ENCODE measurements at regions of chr6 and their contacts with region 1.

Region 1: GRCh38 chr6:108250240-108250866 is 10.5 kb downstream of the SNX3 start:
- DNase-seq: peak; percentile 38 to 61 (median 41)
- ATAC-seq: peak; percentile 90
- H3K4me3 ChIP-seq: no peak overlapping the region
- H3K27ac ChIP-seq: no peak overlapping the region
- H3K4me1 ChIP-seq: peaks cover 3 to 6% of the 10 kb centered on the region in 2 experiments; a peak in 2 of 5 replicates
- H3K27me3 ChIP-seq: no peaks in the 10 kb centered on the region
- CTCF ChIP-seq: peak; percentile 51 to 67 (median 54)
- EP300 ChIP-seq: no peak
- POLR2A ChIP-seq: no peak
- RAD21 ChIP-seq: peak; percentile 24 to 71; a peak in 3 of 4 replicates

Region 2: GRCh38 chr6:108113557-108114519 is 136.5 kb before region 1 on chr6:
- CTCF ChIA-PET with region 1: no interaction called
- POLR2A ChIA-PET with region 1: no interaction called
- in situ Hi-C with region 1: no loop called
- intact Hi-C with region 1: loop called (anchors 10 kb)
- DNase-seq: peak; percentile 60 to 67 (median 62)
- ATAC-seq: peak; percentile 81
- H3K4me3 ChIP-seq: no peak overlapping the region
- H3K27ac ChIP-seq: no peak overlapping the region
- H3K4me1 ChIP-seq: peaks cover 0 to 31% of the 10 kb centered on the region in 2 experiments; a peak in 3 of 5 replicates
- H3K27me3 ChIP-seq: peaks cover 11 to 45% of the 10 kb centered on the region in 2 experiments; a peak in 4 of 5 replicates
- CTCF ChIP-seq: peak; percentile 51 to 77 (median 67); a peak in 5 of 6 replicates
- EP300 ChIP-seq: no peak
- POLR2A ChIP-seq: no peak
- RAD21 ChIP-seq: peak; percentile 84 to 86

Region 3: GRCh38 chr6:108174371-108175175 is 75.8 kb before region 1 on chr6:
- CTCF ChIA-PET with region 1: no interaction called
- POLR2A ChIA-PET with region 1: no interaction called
- in situ Hi-C with region 1: no loop called
- intact Hi-C with region 1: loop called (anchors 5 kb)
- DNase-seq: peak in 1 of 4 experiments; percentile 15
- ATAC-seq: no peak
- H3K4me3 ChIP-seq: no peak overlapping the region
- H3K27ac ChIP-seq: no peak overlapping the region
- H3K4me1 ChIP-seq: peaks cover 0 to 27% of the 10 kb centered on the region in 2 experiments; a peak in 3 of 5 replicates
- H3K27me3 ChIP-seq: peaks cover 46 to 65% of the 10 kb centered on the region in 2 experiments
- CTCF ChIP-seq: no peak
- EP300 ChIP-seq: no peak
- POLR2A ChIP-seq: no peak
- RAD21 ChIP-seq: no peak

Region 4: GRCh38 chr6:108260809-108261569 is 10.6 kb after region 1 on chr6 and contains the start of gene SNX3:
- CTCF ChIA-PET with region 1: no interaction called
- POLR2A ChIA-PET with region 1: interaction called, 12 read pairs
- in situ Hi-C with region 1: no loop called
- intact Hi-C with region 1: no loop called
- DNase-seq: peak; percentile 93 to 97 (median 95)
- ATAC-seq: peak; percentile 95
- H3K4me3 ChIP-seq: peak within 1 kb of the TSS; percentile 100
- H3K27ac ChIP-seq: peak within 1 kb of the TSS; percentile 86
- H3K4me1 ChIP-seq: peaks cover 10 to 17% of the 10 kb centered on the region in 2 experiments
- H3K27me3 ChIP-seq: no peaks in the 10 kb centered on the region
- CTCF ChIP-seq: peak; percentile 8 to 39 (median 17); a peak in 2 of 6 replicates
- EP300 ChIP-seq: no peak
- POLR2A ChIP-seq: peak; percentile 92
- RAD21 ChIP-seq: no peak
- polyA plus RNA-seq, gene SNX3: 48.9 to 68.3 TPM

Region 5: GRCh38 chr6:108359901-108360882 is 109.8 kb after region 1 on chr6:
- CTCF ChIA-PET with region 1: no interaction called
- POLR2A ChIA-PET with region 1: no interaction called
- in situ Hi-C with region 1: no loop called
- intact Hi-C with region 1: loop called (anchors 1 kb)
- DNase-seq: peak in 2 of 4 experiments; percentile 19 to 36
- ATAC-seq: peak; percentile 76
- H3K4me3 ChIP-seq: no peak overlapping the region
- H3K27ac ChIP-seq: peak overlapping the region; percentile 91
- H3K4me1 ChIP-seq: peaks cover 10 to 30% of the 10 kb centered on the region in 2 experiments
- H3K27me3 ChIP-seq: no peaks in the 10 kb centered on the region
- CTCF ChIP-seq: peak; percentile 33 to 49 (median 44); a peak in 4 of 6 replicates
- EP300 ChIP-seq: no peak
- POLR2A ChIP-seq: no peak
- RAD21 ChIP-seq: peak; percentile 34 to 55

Region 6: GRCh38 chr6:108492131-108492766 is 241.9 kb after region 1 on chr6:
- CTCF ChIA-PET with region 1: no interaction called
- POLR2A ChIA-PET with region 1: no interaction called
- in situ Hi-C with region 1: no loop called
- intact Hi-C with region 1: loop called (anchors 1 kb)
- DNase-seq: peak in 3 of 4 experiments; percentile 11 to 41 (median 15)
- ATAC-seq: peak; percentile 62; the same call in 2 of the 3 replicates
- H3K4me3 ChIP-seq: no peak overlapping the region
- H3K27ac ChIP-seq: no peak overlapping the region
- H3K4me1 ChIP-seq: no peaks in the 10 kb centered on the region
- H3K27me3 ChIP-seq: no peaks in the 10 kb centered on the region
- CTCF ChIP-seq: peak; percentile 30 to 74 (median 47); a peak in 5 of 6 replicates
- EP300 ChIP-seq: no peak
- POLR2A ChIP-seq: no peak
- RAD21 ChIP-seq: peak; percentile 75 to 87

Region 7: DNA sequence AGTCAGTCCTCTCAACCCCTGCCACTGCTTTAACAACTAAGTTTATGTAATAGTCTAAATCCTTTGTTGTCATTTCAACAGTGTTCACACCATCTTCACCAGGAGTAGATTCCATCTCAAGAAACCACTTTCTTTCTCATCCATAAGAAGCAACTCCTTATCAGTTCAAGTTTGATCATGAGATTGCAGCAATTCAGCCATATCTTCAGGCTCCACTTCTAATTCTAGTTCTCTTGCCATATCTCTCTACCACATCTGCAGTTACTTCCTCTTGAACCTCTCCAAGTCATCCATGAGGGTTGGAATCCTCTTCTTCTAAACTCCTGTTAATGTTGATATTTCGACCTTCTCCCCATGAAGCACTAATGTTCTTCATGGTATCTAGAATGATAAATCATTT is 252.5 kb after region 1 on chr6:
- CTCF ChIA-PET with region 1: no interaction called
- POLR2A ChIA-PET with region 1: no interaction called
- in situ Hi-C with region 1: no loop called
- intact Hi-C with region 1: no loop called
- DNase-seq: peak in 1 of 4 experiments; percentile 50
- ATAC-seq: peak; percentile 43; the same call in 2 of the 3 replicates
- H3K4me3 ChIP-seq: no peak overlapping the region
- H3K27ac ChIP-seq: no peak overlapping the region
- H3K4me1 ChIP-seq: peaks cover 3 to 13% of the 10 kb centered on the region in 2 experiments; a peak in 3 of 5 replicates
- H3K27me3 ChIP-seq: no peaks in the 10 kb centered on the region
- CTCF ChIP-seq: no peak
- EP300 ChIP-seq: peak; percentile 63
- POLR2A ChIP-seq: no peak
- RAD21 ChIP-seq: no peak

Region 8: GRCh38 chr6:108526739-108527174 is 276.4 kb after region 1 on chr6:
- CTCF ChIA-PET with region 1: no interaction called
- POLR2A ChIA-PET with region 1: no interaction called
- in situ Hi-C with region 1: no loop called
- intact Hi-C with region 1: loop called (anchors 1 kb)
- DNase-seq: peak; percentile 44 to 50 (median 48)
- ATAC-seq: peak; percentile 74
- H3K4me3 ChIP-seq: no peak overlapping the region
- H3K27ac ChIP-seq: no peak overlapping the region
- H3K4me1 ChIP-seq: no peaks in the 10 kb centered on the region
- H3K27me3 ChIP-seq: no peaks in the 10 kb centered on the region
- CTCF ChIP-seq: peak; percentile 59 to 84 (median 80); a peak in 5 of 6 replicates
- EP300 ChIP-seq: no peak
- POLR2A ChIP-seq: no peak
- RAD21 ChIP-seq: peak; percentile 85 to 90

Measured in K562 (cell line).